Activated CD4-positive, alpha-beta T cell treated with anti-CD3 and anti-CD28 coated beads, Interleukin-2, amount 10 ng/mL, durations not matched to agents 24 days and 14 days (primary cell): ENCODE measurements at regions of chr22 and their contacts with region 1.

Region 1: GRCh38 chr22:37244114-37244921 is at the start of gene RAC2:
- DNase-seq: peak; percentile 95
- H3K4me3 Mint-ChIP-seq: peak within 1 kb of the TSS; percentile 99
- H3K27ac Mint-ChIP-seq: peak within 1 kb of the TSS; percentile 98
- H3K4me1 Mint-ChIP-seq: peaks cover 48% of the 10 kb centered on the region
- H3K27me3 Mint-ChIP-seq: no peaks in the 10 kb centered on the region
- total RNA-seq, gene RAC2: 519 and 540 TPM in 2 replicates

Region 2: GRCh38 chr22:36775964-36776669 is 468.2 kb before region 1 on chr22 and contains the start of gene IFT27:
- intact Hi-C with region 1: loop called (anchors 5 kb)
- DNase-seq: peak; percentile 99
- H3K4me3 Mint-ChIP-seq: peak within 1 kb of the TSS; percentile 90
- H3K27ac Mint-ChIP-seq: peak within 1 kb of the TSS; percentile 94
- H3K4me1 Mint-ChIP-seq: peaks cover 24% of the 10 kb centered on the region
- H3K27me3 Mint-ChIP-seq: no peaks in the 10 kb centered on the region
- total RNA-seq, gene IFT27: 26.3 and 28.5 TPM in 2 replicates

Region 3: DNA sequence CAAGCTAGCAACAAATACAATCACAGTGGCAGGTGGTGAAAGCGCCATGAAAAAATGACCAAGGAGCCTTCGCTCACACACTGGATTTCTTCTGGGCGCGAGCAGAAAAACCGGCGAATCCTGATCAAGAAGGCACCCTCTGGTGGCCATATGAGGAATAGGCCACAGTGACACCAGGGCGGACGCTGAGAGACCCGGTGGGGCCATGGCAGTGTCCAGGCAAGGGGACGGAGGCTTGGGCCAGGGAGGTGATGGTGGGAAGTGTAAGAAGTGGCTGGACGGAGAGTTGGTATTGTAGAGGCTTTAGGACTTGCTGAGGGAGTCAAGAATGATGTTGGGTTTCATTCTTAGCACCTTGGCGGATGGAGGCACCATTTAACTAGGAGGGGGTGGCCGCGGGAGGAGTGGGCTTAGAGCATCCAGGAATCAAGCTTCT is 16.6 kb after region 1 on chr22:
- intact Hi-C with region 1: loop called (anchors 1 kb)
- DNase-seq: peak; percentile 90
- H3K4me3 Mint-ChIP-seq: no peak overlapping the region
- H3K27ac Mint-ChIP-seq: peak overlapping the region; percentile 38
- H3K4me1 Mint-ChIP-seq: peaks cover 30% of the 10 kb centered on the region
- H3K27me3 Mint-ChIP-seq: peaks cover 6% of the 10 kb centered on the region

Region 4: GRCh38 chr22:37282385-37282677 is 38.0 kb after region 1 on chr22 and contains the start of gene CYTH4:
- intact Hi-C with region 1: loop called (anchors 2 kb)
- DNase-seq: peak; percentile 94
- H3K4me3 Mint-ChIP-seq: peak within 1 kb of the TSS; percentile 92
- H3K27ac Mint-ChIP-seq: peak within 1 kb of the TSS; percentile 99
- H3K4me1 Mint-ChIP-seq: peaks cover 61% of the 10 kb centered on the region
- H3K27me3 Mint-ChIP-seq: no peaks in the 10 kb centered on the region
- total RNA-seq, gene CYTH4: 43.5 and 44.9 TPM in 2 replicates

Region 5: DNA sequence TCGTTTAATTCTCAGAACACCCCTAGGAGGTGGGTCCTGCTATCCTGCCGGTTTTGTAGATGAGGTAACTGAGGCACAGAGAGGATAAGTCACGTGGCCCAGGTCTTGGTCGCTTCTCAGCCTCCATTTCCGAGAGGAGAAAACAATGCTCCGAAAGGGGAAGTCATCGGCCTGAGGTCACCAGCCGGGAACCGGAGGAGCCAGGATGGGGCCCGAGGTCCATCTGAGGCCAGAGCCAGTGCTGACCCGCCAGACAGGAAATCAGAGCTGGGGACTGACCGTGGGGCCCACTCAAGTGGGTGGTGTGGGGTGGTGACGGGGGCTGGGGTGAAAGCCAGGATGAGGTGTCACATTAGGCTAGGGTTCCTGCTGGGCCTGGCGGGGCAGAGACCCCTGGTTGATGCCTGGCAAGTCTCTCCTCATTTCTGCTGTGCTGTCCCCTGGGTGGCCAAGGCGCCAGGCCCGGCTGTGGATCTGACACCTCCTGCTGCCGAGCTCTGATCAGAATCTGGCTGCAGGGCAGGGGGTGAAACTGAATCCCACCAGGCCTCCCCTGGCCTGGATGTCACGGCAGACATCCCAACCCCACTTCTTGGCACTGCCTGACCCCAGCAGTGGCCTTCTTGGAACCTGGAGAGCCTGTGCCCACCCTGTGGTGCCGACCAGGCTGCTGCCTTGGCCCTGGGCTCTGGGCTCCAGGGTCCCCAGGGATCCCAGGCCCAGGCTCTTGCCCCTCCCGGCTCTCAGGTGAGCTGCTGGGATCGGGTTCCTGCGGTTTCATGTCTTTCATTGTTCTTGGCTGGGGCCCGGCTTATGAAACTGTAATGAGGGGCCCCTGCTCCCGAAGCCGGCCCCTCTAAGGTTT is 464.5 kb after region 1 on chr22:
- intact Hi-C with region 1: no loop called
- DNase-seq: no peak
- H3K4me3 Mint-ChIP-seq: no peak overlapping the region
- H3K27ac Mint-ChIP-seq: no peak overlapping the region
- H3K4me1 Mint-ChIP-seq: no peaks in the 10 kb centered on the region
- H3K27me3 Mint-ChIP-seq: no peaks in the 10 kb centered on the region